Posterior cingulate gyrus (tissue), 11 donors: ENCODE measurements at regions of chr17 and their contacts with region 1.

Region 1: GRCh38 chr17:40532520-40533204 is 31.2 kb upstream of the TNS4 start:
- DNase-seq: peak in 1 of 10 donors; percentile 33

Region 2: DNA sequence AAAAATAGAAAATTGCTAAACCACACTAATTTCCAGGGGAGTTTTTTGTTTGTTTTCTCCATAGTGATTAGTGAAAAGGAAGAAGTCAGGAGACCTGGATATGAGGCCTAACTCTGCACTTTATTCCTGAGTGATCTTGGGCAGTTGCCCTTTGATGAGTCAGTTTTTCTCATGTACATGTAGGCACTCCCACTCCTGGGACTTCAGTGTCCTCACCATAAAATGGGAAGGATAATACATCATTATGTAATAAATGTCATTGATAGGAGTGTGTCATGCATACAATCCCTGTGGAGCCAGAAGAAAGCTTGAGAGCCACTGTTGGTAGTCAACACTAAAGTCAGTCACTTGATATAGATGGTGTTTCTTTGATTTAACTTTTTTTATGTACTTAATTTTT is 281.1 kb before region 1 on chr17:
- intact Hi-C with region 1: no loop called
- DNase-seq: no peak

Region 3: GRCh38 chr17:40358323-40359038 is 174.2 kb before region 1 on chr17:
- intact Hi-C with region 1: loop called (anchors 1 kb)
- DNase-seq: peak; percentile 81 to 98 (median 94)

Region 4: DNA sequence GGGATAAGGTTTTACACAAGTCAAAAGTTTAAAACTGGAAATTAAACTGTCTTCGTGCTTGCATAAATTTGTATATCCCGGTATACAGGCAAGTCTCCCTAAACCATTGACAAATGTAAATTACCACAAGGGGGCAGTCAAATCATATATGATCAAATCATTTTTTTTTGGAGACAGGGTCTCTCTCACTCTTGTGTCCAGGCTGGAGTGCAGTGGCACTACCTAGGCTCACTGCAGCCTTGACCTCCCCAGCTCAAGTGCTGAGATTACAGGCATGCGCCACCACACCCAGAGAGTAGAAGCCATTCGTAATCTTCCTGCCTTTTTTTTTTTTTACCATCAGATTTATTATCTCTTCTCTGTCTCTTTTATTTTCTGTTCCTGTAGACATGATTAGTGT is 133.5 kb before region 1 on chr17:
- intact Hi-C with region 1: loop called (anchors 1 kb)
- DNase-seq: peak in 1 of 10 donors; percentile 46

Region 5: GRCh38 chr17:40443583-40444327 is 88.9 kb before region 1 on chr17:
- intact Hi-C with region 1: loop called (anchors 1 kb)
- DNase-seq: peak; percentile 45 to 96 (median 76)